PC-9 (cell line): ENCODE measurements at regions of chr1 and their contacts with region 1.

Region 1: GRCh38 chr1:31166462-31166861 is 73.2 kb downstream of the NKAIN1 start:
- DNase-seq: no peak
- H3K4me3 ChIP-seq: no peak overlapping the region
- H3K27ac ChIP-seq: no peak overlapping the region
- H3K4me1 ChIP-seq: peaks cover 11% of the 10 kb centered on the region
- H3K27me3 ChIP-seq: no peaks in the 10 kb centered on the region
- CTCF ChIP-seq: no peak

Region 2: GRCh38 chr1:30903343-30904034 is 263.0 kb before region 1 on chr1:
- CTCF ChIA-PET with region 1: no interaction called
- POLR2A ChIA-PET with region 1: interaction called, 14 read pairs
- intact Hi-C with region 1: no loop called
- DNase-seq: no peak
- H3K4me3 ChIP-seq: no peak overlapping the region
- H3K27ac ChIP-seq: no peak overlapping the region
- H3K4me1 ChIP-seq: no peaks in the 10 kb centered on the region
- H3K27me3 ChIP-seq: no peaks in the 10 kb centered on the region
- CTCF ChIP-seq: no peak

Region 3: DNA sequence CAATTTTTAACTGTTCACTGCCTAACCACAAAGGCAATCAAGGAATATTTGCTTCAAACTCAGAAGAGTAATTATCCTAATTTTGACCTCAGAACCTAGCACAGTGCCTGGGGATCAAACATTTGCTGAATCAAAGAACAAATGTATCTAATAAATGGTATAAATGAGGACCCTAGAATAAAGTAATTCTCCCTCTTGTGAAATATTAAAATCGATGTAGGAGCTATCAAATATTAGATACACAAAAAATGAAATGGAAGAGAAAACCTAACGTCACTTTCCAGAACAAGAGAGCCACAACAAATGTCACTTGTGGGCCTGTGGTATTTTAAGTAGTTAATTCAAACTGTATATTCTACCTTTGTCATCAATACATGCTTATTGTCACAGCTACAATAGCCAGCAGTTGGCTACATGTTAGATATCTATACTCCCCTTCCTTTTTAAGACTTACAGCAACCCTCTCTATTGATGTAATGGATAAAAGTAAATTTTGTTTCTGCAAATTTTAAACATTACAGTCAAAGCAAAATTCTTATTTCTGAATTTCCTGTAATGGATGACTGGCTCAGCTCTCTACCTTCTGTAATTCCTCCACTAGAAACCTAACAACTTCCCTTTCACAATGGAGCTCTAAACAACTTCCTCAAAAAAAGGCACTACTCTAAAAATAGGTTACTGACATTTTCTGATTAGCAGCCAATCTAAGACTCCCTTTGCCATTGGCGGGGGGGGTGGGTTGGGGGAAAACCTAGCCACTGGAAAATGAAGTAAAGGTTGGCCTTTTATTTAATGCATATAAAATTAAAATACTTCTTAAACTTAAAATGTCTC is 138.6 kb before region 1 on chr1:
- CTCF ChIA-PET with region 1: interaction called, 12 read pairs
- POLR2A ChIA-PET with region 1: no interaction called
- intact Hi-C with region 1: no loop called
- DNase-seq: no peak
- H3K4me3 ChIP-seq: no peak overlapping the region
- H3K27ac ChIP-seq: 0 out of 2 replicates have a peak overlapping the region, but pooled peaks have one; percentile 12
- H3K4me1 ChIP-seq: peaks cover 14% of the 10 kb centered on the region
- H3K27me3 ChIP-seq: no peaks in the 10 kb centered on the region
- CTCF ChIP-seq: no peak

Region 4: DNA sequence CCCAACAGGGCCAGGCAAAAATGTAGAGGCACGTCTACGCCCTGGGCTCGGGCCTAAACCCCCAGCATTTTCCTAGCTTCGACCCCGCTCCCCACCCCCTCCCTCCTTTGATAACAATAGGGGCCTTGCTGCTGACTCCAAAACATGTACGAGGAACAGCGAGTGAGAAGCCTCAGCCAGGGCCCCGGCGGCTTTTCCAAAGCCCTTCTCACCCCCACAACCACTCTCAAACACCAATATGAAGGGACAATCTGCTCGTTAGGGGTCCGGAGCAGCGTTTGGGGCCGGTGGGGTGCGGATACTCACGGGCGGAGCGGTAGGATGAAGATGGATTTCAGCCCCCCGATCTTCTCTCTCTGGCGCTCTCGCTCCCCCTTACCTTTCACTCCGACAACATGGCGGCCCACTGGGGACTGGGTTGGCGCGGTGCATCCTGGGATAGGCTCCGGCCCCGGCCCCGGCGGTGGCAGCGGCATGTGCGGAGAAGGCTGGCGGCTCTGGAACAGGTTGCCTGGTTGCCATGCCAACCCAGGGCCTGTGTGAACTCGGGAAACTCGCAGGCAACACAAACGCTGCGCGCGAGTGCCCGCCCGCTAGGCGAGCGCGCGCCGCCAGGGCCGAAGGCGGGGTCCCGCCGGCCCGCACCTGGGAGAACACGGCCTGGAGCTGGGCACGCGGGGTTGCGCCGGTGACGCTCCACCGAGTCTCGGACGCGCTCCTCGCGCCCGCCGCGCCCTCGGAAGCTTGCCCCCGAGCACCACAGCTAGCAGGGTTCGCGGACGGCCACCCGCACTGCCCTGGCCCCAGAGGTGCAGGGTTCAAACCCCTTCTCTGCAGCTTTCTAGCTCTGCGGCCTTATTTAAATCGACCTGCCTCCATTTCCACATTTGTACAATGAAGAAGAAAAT is 100.9 kb before region 1 on chr1 and contains the start of gene PUM1:
- CTCF ChIA-PET with region 1: no interaction called
- POLR2A ChIA-PET with region 1: interaction called, 3 read pairs
- intact Hi-C with region 1: loop called (anchors 2 kb)
- DNase-seq: peak; percentile 89 to 99
- H3K4me3 ChIP-seq: peak within 1 kb of the TSS; percentile 85
- H3K27ac ChIP-seq: peak within 1 kb of the TSS; percentile 94
- H3K4me1 ChIP-seq: peaks cover 23% of the 10 kb centered on the region
- H3K27me3 ChIP-seq: no peaks in the 10 kb centered on the region
- CTCF ChIP-seq: no peak
- total RNA-seq, gene PUM1: 99.2 and 117 TPM in 2 replicates

Region 5: DNA sequence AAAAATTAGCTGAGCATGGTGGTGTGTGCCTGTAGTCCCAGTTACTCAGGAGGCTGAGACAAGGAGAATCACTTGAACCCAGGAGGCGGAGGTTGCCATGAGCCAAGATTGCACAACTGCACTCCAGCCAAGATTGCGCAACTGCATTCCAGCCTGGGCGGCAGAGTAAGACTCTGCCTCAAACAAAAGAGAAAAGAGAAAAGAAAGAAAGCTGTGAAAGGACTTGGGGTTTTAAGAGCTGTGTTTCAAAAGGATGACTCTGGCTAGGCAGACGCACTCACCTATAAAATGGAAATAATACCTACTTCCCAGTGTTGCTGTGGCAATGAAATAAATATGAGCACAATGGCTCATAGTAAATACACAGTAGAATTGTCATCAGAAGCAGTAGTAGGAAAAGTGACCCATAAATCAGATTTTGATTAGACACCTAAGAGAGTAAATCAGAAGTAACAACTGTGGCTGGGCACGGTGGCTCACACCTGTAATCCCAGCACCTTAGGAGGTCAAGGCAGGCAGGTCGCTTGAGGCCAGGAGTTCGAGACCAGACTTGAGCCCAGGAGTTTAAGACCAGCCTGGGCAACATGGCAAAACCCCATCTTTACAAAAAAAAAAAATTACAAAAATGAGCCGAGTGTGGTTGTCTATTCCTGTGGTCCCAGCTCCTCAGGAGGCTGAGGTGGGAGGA is 55.0 kb before region 1 on chr1:
- CTCF ChIA-PET with region 1: no interaction called
- POLR2A ChIA-PET with region 1: no interaction called
- intact Hi-C with region 1: no loop called
- DNase-seq: peak; percentile 60 to 69
- H3K4me3 ChIP-seq: no peak overlapping the region
- H3K27ac ChIP-seq: peak overlapping the region; percentile 47; the same call in 1 of the 2 replicates
- H3K4me1 ChIP-seq: peaks cover 8% of the 10 kb centered on the region
- H3K27me3 ChIP-seq: no peaks in the 10 kb centered on the region
- CTCF ChIP-seq: no peak

Region 6: DNA sequence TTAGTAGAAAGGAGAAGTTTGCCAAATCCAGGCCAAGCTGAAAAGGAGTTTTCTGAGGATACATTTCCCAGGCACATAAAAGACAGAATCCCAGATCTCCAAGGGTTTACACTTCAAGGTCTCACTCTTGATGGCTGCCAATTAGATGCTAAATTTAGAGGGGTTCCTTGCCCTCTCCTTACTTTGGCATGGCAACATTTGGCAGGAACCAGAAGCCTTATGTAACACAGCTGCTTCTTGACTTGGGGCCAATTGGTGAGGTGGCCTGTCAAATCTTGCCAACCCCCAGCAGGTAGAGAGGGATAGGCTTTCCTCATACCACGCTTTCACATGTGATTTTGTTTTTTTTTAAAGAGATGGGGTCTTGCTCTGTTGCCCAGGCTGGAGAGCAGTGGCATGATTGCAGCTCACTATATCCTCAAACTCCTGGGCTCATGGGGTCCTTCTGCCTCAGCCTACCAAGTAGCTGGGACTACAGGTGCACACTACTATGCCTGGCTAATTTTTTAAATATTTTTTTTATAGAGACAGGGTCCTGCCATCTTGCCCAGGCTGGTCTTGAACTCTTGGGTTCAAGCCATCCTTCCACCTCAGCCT is 98.4 kb after region 1 on chr1:
- CTCF ChIA-PET with region 1: no interaction called
- POLR2A ChIA-PET with region 1: interaction called, 19 read pairs
- intact Hi-C with region 1: no loop called
- DNase-seq: no peak
- H3K4me3 ChIP-seq: no peak overlapping the region
- H3K27ac ChIP-seq: no peak overlapping the region
- H3K4me1 ChIP-seq: no peaks in the 10 kb centered on the region
- H3K27me3 ChIP-seq: no peaks in the 10 kb centered on the region
- CTCF ChIP-seq: no peak